ENCODE measurements at regions of chr9 and their contacts with region 1.

Region 1: GRCh38 chr9:130243015-130243734 is 22.4 kb upstream of the HMCN2 start:
- DNase-seq: peak; percentile 31
- ATAC-seq: peak; percentile 82
- H3K4me3 ChIP-seq: no peak overlapping the region
- H3K27ac ChIP-seq: no peak overlapping the region
- H3K4me1 ChIP-seq: peaks cover 19% of the 10 kb centered on the region
- H3K27me3 ChIP-seq: no peaks in the 10 kb centered on the region
- CTCF ChIP-seq: peak; percentile 79 to 92 (median 79)
- EP300 ChIP-seq: no peak
- POLR2A ChIP-seq: no peak
- RAD21 ChIP-seq: peak; percentile 47

Region 2: DNA sequence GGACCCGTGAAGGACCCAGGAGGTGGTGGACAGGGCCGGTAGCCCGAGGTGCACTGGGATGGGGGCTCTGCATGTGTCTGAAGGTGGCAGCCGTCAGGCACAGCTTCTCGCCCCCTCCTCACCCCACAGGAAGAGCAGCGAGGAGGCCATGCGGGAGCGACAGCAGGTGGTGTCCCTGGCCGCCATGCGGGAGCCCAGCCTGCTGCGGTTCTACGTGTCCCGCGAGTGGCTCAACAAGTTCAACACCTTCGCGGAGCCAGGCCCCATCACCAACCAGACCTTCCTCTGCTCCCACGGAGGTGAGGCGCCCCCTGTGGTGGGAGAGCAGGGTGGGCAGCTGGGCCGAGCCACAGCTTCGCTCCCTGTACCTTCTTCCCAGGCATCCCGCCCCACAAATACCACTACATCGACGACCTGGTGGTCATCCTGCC is 368.0 kb before region 1 on chr9:
- CTCF ChIA-PET with region 1: no interaction called
- POLR2A ChIA-PET with region 1: no interaction called
- RAD21 ChIA-PET with region 1: no interaction called
- SMC1A ChIA-PET with region 1: no interaction called
- in situ Hi-C with region 1: loop called (anchors 10 kb)
- intact Hi-C with region 1: no loop called
- DNase-seq: no peak
- ATAC-seq: no peak
- H3K4me3 ChIP-seq: no peak overlapping the region
- H3K27ac ChIP-seq: no peak overlapping the region
- H3K4me1 ChIP-seq: no peaks in the 10 kb centered on the region; the same call in 1 of the 2 replicates
- H3K27me3 ChIP-seq: no peaks in the 10 kb centered on the region
- CTCF ChIP-seq: no peak; a peak in 1 of 6 replicates
- EP300 ChIP-seq: no peak
- POLR2A ChIP-seq: 0 out of 2 replicates have a peak, but pooled peaks have one; percentile 33
- RAD21 ChIP-seq: no peak

Region 3: DNA sequence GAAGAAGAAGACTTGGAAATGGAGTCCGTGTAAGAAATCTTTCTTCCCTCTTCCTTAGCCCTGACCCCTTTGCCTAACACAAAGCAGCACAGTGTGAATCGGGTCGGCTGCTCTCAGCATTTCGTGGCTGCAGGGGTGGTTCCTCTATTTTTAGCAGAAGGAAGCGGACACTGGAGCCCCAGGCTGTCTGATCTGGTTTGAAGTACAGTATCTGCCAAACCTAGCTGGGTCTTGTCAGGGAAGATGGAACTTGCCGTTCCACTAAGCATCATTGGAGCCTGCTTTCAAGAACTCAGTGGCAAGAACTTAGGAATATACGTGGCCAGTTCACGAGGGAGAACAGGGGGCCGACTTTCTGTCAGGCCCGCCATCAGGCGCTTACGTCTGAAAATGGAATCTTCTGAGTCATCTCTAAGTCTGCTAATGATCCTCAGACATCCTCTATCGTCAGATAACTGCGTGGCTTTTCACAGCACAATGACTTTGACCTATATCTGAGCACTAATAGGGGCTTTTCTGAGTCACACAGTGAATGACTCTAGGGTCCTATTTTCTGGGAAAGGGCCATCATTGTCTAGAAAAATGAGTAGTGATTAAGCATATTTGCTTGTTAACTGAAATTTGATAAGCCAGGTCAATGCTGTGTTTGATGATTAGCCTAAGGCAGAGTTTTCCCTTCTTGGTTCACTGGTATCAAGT is 114.3 kb before region 1 on chr9:
- CTCF ChIA-PET with region 1: interaction called, 3 read pairs
- POLR2A ChIA-PET with region 1: no interaction called
- RAD21 ChIA-PET with region 1: no interaction called
- SMC1A ChIA-PET with region 1: interaction called, 3 read pairs
- in situ Hi-C with region 1: no loop called
- intact Hi-C with region 1: loop called (anchors 5 kb)
- DNase-seq: peak; percentile 79
- ATAC-seq: peak; percentile 94
- H3K4me3 ChIP-seq: peak overlapping the region; percentile 4; the same call in 1 of the 2 replicates
- H3K27ac ChIP-seq: peak overlapping the region; percentile 94
- H3K4me1 ChIP-seq: peaks cover 21% of the 10 kb centered on the region
- H3K27me3 ChIP-seq: no peaks in the 10 kb centered on the region
- CTCF ChIP-seq: no peak
- EP300 ChIP-seq: peak; percentile 96 to 98; a peak in 3 of 4 replicates
- POLR2A ChIP-seq: peak; percentile 64; the same call in 1 of the 2 replicates
- RAD21 ChIP-seq: 0 out of 2 replicates have a peak, but pooled peaks have one; percentile 6

Region 4: DNA sequence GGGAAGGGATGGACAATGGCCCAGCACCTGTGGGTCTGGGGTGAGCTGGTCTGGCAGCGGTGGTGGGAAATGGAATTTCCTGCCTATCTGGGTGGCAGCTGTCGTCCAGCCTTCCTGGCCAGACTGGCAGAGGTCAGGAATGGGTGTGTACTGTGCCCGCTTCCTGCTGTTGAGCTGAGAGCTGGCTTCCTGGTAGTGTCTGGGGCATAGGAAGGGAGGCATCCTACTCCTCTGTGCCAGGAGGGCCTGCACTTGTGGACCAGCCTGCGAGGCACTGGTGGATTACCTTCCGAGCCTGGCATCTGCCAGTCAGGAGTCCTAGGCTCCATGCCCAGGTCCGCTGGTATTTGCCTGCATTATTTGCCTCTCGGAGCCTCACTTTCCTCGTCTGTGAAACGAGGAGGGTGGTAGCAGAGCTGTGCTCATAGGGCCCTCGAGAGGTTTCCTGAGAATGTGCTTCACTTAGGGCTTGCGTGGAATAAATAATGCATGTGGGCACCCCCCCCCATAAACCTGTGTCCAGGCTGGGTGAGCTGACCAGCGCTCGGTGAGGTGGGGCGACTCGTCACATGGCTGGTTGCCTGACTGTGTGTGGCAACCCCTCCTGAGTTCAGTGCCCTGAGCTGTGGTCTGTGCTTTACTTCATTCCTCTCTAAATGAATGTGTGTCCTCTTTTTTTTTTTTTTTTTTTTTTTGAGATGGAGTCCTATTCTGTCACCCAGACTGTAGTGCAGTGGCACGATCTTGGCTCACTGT is 70.1 kb after region 1 on chr9:
- CTCF ChIA-PET with region 1: interaction called, 13 read pairs
- POLR2A ChIA-PET with region 1: interaction called, 7 read pairs
- RAD21 ChIA-PET with region 1: interaction called, 7 read pairs
- SMC1A ChIA-PET with region 1: interaction called, 3 read pairs
- in situ Hi-C with region 1: no loop called
- intact Hi-C with region 1: no loop called
- DNase-seq: no peak
- ATAC-seq: peak; percentile 12; the same call in 2 of the 3 replicates
- H3K4me3 ChIP-seq: no peak overlapping the region
- H3K27ac ChIP-seq: no peak overlapping the region
- H3K4me1 ChIP-seq: peaks cover 11% of the 10 kb centered on the region
- H3K27me3 ChIP-seq: no peaks in the 10 kb centered on the region; a peak in 2 of 4 replicates
- CTCF ChIP-seq: no peak
- EP300 ChIP-seq: no peak
- POLR2A ChIP-seq: no peak
- RAD21 ChIP-seq: no peak